ENCODE measurements at regions of chr12 and their contacts with region 1.

Region 1: GRCh38 chr12:71648537-71648936 is 15.1 kb downstream of the ZFC3H1 start:
- DNase-seq: peak; percentile 69
- ATAC-seq: peak; percentile 94
- H3K4me3 ChIP-seq: no peak overlapping the region
- H3K27ac ChIP-seq: peak overlapping the region; percentile 7; the same call in 1 of the 2 replicates
- H3K4me1 ChIP-seq: peaks cover 17% of the 10 kb centered on the region
- H3K27me3 ChIP-seq: no peaks in the 10 kb centered on the region
- CTCF ChIP-seq: no peak

Region 2: GRCh38 chr12:71626768-71627167 is 21.8 kb before region 1 on chr12:
- CTCF ChIA-PET with region 1: no interaction called
- POLR2A ChIA-PET with region 1: no interaction called
- intact Hi-C with region 1: loop called (anchors 1 kb)
- DNase-seq: peak; percentile 69
- ATAC-seq: peak; percentile 84
- H3K4me3 ChIP-seq: no peak overlapping the region
- H3K27ac ChIP-seq: peak overlapping the region; percentile 86
- H3K4me1 ChIP-seq: peaks cover 27% of the 10 kb centered on the region
- H3K27me3 ChIP-seq: no peaks in the 10 kb centered on the region
- CTCF ChIP-seq: no peak